HepG2 (cell line): ENCODE measurements at regions of chr21 and their contacts with region 1.

Region 1: GRCh38 chr21:37711836-37712568 is 204.3 kb downstream of the KCNJ6 start:
- DNase-seq: peak; percentile 41
- ATAC-seq: peak; percentile 96
- H3K4me3 ChIP-seq: no peak overlapping the region
- H3K27ac ChIP-seq: no peak overlapping the region
- H3K4me1 ChIP-seq: peaks cover 7% of the 10 kb centered on the region; the same call in 1 of the 2 replicates
- H3K27me3 ChIP-seq: no peaks in the 10 kb centered on the region
- CTCF ChIP-seq: peak; percentile 76
- EP300 ChIP-seq: no peak
- POLR2A ChIP-seq: no peak
- RAD21 ChIP-seq: no peak

Region 2: DNA sequence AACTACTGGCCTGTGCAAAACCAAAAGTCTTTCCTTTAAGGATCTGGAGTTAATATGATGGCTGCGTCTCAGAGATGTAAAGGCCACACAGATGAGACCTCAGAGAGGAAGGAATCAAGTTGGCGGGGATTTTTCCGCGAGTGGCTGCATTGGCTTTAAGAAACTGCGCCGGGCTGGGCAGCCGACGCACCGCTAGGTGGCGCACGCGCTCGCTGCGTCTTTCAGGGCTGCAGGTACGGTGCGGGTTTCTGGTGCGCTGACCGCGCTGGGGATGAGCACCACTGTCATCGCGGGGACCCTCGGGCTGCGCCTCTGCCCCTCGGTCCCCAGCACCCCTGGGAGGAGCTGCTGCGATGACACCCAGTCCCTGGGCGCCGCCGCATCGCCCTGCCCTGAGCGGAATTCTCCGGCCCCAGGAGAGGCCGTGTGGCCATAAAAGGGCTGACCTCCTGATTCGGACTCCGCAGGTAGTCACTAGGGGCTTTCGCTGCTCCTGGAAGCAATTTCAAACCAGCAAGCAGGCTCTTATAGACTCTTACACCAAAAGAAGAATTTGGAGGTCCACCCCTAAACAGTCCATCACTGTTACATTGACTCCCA is 36.7 kb before region 1 on chr21:
- CTCF ChIA-PET with region 1: no interaction called
- POLR2A ChIA-PET with region 1: no interaction called
- in situ Hi-C with region 1: no loop called
- intact Hi-C with region 1: loop called (anchors 1 kb)
- DNase-seq: no peak
- ATAC-seq: peak; percentile 88
- H3K4me3 ChIP-seq: no peak overlapping the region
- H3K27ac ChIP-seq: no peak overlapping the region
- H3K4me1 ChIP-seq: no peaks in the 10 kb centered on the region
- H3K27me3 ChIP-seq: no peaks in the 10 kb centered on the region; a peak in 1 of 5 replicates
- CTCF ChIP-seq: peak; percentile 84
- EP300 ChIP-seq: no peak
- POLR2A ChIP-seq: no peak
- RAD21 ChIP-seq: peak; percentile 54

Region 3: DNA sequence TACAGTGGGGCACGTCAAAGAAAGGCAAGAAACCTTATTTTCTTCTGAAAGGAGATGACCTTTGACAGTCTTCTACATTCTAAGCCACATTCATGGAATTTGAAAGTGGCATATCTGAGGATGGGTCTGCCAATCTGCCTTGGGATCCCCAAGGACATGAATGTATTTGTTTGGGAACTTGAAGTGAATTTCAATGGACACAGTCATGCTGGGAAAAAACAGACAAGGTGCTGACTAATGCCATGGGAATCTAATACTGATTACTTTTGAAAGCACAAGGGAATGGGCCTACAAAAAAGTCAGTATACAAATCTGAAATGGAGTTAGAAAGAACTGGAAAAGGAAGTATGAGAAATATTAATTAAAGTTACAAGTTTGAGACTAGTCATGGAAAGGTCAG is 75.5 kb after region 1 on chr21:
- CTCF ChIA-PET with region 1: no interaction called
- POLR2A ChIA-PET with region 1: no interaction called
- in situ Hi-C with region 1: no loop called
- intact Hi-C with region 1: no loop called
- DNase-seq: no peak
- ATAC-seq: no peak
- H3K4me3 ChIP-seq: no peak overlapping the region
- H3K27ac ChIP-seq: no peak overlapping the region
- H3K4me1 ChIP-seq: no peaks in the 10 kb centered on the region
- H3K27me3 ChIP-seq: no peaks in the 10 kb centered on the region
- CTCF ChIP-seq: no peak
- EP300 ChIP-seq: no peak
- POLR2A ChIP-seq: no peak
- RAD21 ChIP-seq: no peak

Region 4: DNA sequence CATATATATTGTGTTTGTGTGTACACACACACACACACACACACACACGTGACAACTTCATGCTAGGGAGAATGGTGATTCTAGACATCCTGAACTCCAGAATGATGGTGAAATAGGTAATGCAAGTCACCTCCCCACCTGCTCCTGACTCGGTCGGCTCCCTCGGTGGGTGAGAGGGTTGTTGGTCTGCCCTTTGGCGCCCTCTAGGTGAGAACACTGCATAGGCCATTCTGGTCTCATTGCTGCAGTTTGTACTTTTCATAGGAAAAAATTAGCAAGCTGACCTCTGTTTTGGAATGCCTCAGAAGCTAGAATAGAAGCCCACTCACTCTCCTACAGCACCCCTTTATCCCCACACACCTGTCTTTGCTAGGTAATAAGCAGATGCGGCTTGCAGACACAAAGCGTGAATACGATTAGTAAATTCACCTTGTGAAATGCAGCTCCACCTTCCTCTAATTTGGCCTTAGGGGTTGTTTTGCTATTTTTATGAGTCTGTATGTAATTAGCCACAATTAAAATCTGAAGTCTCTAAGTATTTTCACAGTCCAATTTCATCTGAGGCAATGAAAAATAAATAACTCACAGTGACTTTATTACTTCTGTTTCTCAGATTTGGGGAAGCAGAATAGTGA is 414.8 kb after region 1 on chr21:
- CTCF ChIA-PET with region 1: interaction called, 10 read pairs
- POLR2A ChIA-PET with region 1: no interaction called
- in situ Hi-C with region 1: loop called (anchors 5 kb)
- intact Hi-C with region 1: loop called (anchors 1 kb)
- DNase-seq: peak; percentile 35
- ATAC-seq: peak; percentile 98
- H3K4me3 ChIP-seq: no peak overlapping the region
- H3K27ac ChIP-seq: no peak overlapping the region
- H3K4me1 ChIP-seq: no peaks in the 10 kb centered on the region
- H3K27me3 ChIP-seq: no peaks in the 10 kb centered on the region
- CTCF ChIP-seq: peak; percentile 77
- EP300 ChIP-seq: no peak
- POLR2A ChIP-seq: no peak
- RAD21 ChIP-seq: 0 out of 2 replicates have a peak, but pooled peaks have one; percentile 28